GM13977 (cell line): ENCODE measurements at regions of chr14 and their contacts with region 1.

Region 1: DNA sequence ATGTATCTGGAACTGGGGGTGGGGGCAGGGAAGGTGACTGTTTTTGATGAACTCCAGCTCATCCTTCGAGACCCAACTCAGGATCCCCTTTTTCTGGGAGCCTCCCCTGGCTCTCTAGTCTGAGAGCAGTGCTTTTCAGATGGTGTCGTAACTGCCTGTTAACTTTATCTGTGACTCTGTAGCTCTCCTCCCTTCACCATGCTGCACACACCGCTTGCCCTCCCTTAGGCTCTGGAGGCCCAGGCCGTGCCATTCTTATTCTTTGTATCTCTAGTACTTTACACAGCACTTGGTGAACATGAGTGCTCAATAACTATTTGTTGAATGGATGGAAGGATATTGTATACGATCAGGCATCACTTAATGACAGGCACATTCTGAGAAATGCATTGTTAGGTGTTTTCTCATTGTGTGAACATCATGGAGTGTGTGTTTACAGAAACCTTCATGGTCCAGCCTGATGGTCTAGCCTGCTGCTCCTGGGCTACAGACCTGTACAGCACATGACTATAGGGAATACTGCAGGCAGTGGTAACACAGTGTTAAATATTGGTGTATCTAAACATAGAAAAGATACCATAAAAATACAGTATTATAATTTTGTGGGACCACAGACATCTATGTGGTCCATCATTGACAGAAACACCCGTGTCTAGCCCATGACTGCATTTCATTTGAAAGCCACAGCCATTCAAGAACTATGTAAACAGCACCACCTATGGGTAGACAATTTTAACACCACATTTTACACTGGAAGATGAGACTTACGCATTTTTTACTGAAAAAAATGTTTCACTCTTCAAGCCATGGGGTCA is 91.8 kb downstream of the EML1 start:
- DNase-seq: peak; percentile 63
- CTCF ChIP-seq: peak; percentile 78

Region 2: GRCh38 chr14:99524804-99525698 is 360.0 kb before region 1 on chr14:
- in situ Hi-C with region 1: loop called (anchors 25 kb)
- DNase-seq: no peak
- CTCF ChIP-seq: no peak

Region 3: GRCh38 chr14:99718031-99718810 is 166.8 kb before region 1 on chr14:
- in situ Hi-C with region 1: loop called (anchors 25 kb)
- DNase-seq: peak; percentile 60
- CTCF ChIP-seq: no peak

Region 4: DNA sequence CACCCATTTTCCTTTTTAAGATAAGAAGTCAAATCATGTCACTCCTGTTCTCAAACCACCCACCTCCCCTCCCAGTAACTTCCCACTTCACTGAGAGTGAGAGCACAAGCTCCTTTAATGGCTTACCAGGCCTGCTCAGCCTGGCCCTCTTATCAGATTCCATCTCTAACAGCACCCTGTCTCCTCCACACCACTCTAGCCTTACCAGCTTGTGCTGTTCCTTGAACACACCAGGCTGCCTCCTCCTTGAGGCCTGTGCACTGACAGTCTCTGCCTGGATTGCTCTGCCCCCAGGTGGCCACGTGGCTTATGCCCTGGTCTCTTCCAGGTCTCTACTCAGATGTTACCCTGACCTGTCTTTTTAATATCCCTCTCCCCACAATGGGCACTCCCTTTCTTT is 140.1 kb after region 1 on chr14:
- in situ Hi-C with region 1: no loop called
- DNase-seq: peak; percentile 50
- CTCF ChIP-seq: peak; percentile 47